Posterior cingulate gyrus (tissue), 11 donors: ENCODE measurements at regions of chr11 and their contacts with region 1.

Region 1: DNA sequence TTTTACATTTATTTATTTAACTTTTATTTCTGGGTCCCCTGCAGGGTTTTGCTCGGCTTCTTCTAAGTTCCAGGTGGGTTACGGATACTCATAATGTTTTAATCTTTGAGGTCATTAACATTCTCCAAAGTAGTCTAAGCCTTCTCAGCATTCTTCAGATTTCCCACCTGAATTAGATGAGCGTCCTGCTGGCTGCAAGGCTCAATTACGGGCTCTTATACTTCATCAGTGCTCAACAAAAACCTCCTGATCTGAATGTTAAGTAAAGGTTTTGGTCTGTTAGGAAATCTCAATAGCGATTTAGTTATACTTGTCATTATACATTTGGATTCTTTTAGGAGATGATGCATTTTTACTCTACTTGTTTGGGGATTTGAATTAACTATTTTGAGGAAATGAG is 27.3 kb upstream of the NFRKB start:
- DNase-seq: no peak

Region 2: GRCh38 chr11:129973068-129973467 is 50.4 kb after region 1 on chr11:
- intact Hi-C with region 1: no loop called
- DNase-seq: no peak

Region 3: DNA sequence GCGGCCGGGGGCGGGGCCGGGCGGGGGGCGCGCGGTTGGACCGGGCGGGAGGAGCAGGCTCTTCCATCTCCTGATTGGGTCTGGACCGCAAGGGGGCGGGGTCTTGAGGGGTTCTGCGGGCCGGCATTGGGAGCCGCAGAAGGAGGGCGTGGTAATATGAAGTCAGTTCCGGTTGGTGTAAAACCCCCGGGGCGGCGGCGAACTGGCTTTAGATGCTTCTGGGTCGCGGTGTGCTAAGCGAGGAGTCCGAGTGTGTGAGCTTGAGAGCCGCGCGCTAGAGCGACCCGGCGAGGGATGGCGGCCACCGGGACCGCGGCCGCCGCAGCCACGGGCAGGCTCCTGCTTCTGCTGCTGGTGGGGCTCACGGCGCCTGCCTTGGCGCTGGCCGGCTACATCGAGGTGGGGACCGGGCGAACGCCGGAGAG is 147.0 kb after region 1 on chr11 and contains the start of gene APLP2:
- intact Hi-C with region 1: loop called (anchors 2 kb)
- DNase-seq: peak; percentile 98 to 100 (median 99)

Region 4: GRCh38 chr11:130115218-130115617 is 192.5 kb after region 1 on chr11:
- intact Hi-C with region 1: no loop called
- DNase-seq: no peak

Region 5: GRCh38 chr11:130131961-130132850 is 209.5 kb after region 1 on chr11:
- intact Hi-C with region 1: loop called (anchors 1 kb)
- DNase-seq: no peak

Region 6: GRCh38 chr11:130622141-130622542 is 699.5 kb after region 1 on chr11:
- intact Hi-C with region 1: no loop called
- DNase-seq: no peak